Breast epithelium (tissue), 4 donors: ENCODE measurements at regions of chr16 and their contacts with region 1.

Region 1: DNA sequence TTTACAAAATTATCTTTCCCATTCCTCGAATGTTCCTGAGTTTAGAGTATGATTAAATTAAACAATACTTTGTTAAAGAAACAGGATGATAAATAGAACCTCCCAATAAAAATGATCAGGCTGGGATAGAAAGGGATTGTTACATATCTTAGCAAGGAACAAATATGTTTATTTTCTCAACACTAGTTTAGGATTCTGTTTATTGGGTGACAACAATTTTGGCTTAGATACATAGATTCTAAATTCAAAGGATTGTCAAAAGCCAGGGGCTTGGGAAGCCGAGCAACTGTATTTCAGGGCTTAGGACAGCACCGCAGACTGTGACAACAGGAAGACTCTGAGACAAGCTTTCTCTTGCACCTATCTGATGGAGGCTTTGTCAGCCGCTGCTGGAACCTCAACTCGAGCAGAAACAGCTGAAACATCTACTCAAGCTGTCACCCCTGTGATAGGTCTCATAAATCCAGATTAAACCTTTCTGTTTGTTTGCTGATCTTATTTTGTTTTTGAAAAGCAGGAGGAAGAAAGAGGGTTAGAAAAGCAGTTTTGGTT is 562.8 kb upstream of the ZFHX3 start:
- DNase-seq: no peak
- H3K4me3 ChIP-seq: no peak overlapping the region
- H3K27ac ChIP-seq: no peak overlapping the region
- H3K4me1 ChIP-seq: no peaks in the 10 kb centered on the region
- H3K27me3 ChIP-seq: peaks cover 0 to 9% of the 10 kb centered on the region in 2 donors
- CTCF ChIP-seq: no peak
- POLR2A ChIP-seq: no peak

Region 2: GRCh38 chr16:73262931-73263330 is 347.8 kb before region 1 on chr16:
- intact Hi-C with region 1: loop called (anchors 5 kb)
- DNase-seq: no peak
- H3K4me3 ChIP-seq: no peak overlapping the region
- H3K27ac ChIP-seq: no peak overlapping the region
- H3K4me1 ChIP-seq: no peaks in the 10 kb centered on the region
- H3K27me3 ChIP-seq: peaks cover 0 to 4% of the 10 kb centered on the region in 2 donors
- CTCF ChIP-seq: no peak
- POLR2A ChIP-seq: no peak